ENCODE measurements at regions of chr16 and their contacts with region 1.

Region 1: GRCh38 chr16:50152807-50153452 is at the start of gene TENT4B:
- DNase-seq: peak; percentile 56 to 88
- H3K4me3 ChIP-seq: peak within 1 kb of the TSS; percentile 99
- H3K27ac ChIP-seq: peak within 1 kb of the TSS; percentile 66
- H3K4me1 ChIP-seq: peaks cover 20% of the 10 kb centered on the region
- H3K27me3 ChIP-seq: no peaks in the 10 kb centered on the region
- CTCF ChIP-seq: no peak
- total RNA-seq, gene TENT4B: 6.1 and 11.4 TPM in 2 replicates

Region 2: DNA sequence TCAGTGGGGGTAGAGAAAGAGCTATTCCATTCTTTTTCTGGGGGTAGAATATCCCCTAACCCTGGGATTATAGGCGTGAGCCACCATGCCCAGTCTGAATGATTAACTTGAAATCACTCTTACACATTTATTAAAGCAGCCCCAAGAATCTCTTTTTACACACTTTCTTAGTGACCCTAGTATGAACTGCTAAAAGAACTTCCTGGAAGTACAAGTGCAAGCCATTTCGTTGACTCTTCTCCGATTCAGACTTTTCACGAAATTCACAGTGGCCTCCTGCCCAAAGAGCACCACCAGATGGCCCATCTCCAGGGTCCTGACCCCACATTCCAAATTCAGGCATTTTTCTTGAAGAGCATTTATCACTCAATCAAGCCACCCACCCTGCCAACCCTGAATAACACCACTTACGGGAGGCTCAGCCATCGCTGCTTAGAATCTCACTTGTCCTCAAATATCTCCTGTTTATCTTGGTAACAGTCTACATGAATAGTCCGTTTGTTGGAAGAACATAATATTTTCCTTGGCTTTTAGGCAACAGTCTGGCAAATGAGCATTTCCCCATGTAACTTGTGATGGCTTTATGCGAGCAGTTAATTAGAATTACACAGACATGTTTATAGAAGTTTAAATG is 325.0 kb before region 1 on chr16:
- CTCF ChIA-PET with region 1: no interaction called
- POLR2A ChIA-PET with region 1: no interaction called
- intact Hi-C with region 1: no loop called
- DNase-seq: no peak
- H3K4me3 ChIP-seq: no peak overlapping the region
- H3K27ac ChIP-seq: no peak overlapping the region
- H3K4me1 ChIP-seq: no peaks in the 10 kb centered on the region
- H3K27me3 ChIP-seq: peaks cover 94% of the 10 kb centered on the region
- CTCF ChIP-seq: no peak

Region 3: GRCh38 chr16:50065624-50066481 is 87.1 kb before region 1 on chr16 and contains the start of gene HEATR3:
- CTCF ChIA-PET with region 1: no interaction called
- POLR2A ChIA-PET with region 1: no interaction called
- intact Hi-C with region 1: loop called (anchors 2 kb)
- DNase-seq: peak; percentile 70 to 91
- H3K4me3 ChIP-seq: peak within 1 kb of the TSS; percentile 94
- H3K27ac ChIP-seq: peak within 1 kb of the TSS; percentile 66
- H3K4me1 ChIP-seq: peaks cover 15% of the 10 kb centered on the region; the same call in 1 of the 2 replicates
- H3K27me3 ChIP-seq: no peaks in the 10 kb centered on the region
- CTCF ChIP-seq: no peak
- total RNA-seq, gene HEATR3: 11.5 and 14.3 TPM in 2 replicates

Region 4: GRCh38 chr16:50821586-50821985 is 668.7 kb after region 1 on chr16:
- CTCF ChIA-PET with region 1: no interaction called
- POLR2A ChIA-PET with region 1: no interaction called
- intact Hi-C with region 1: no loop called
- DNase-seq: no peak
- H3K4me3 ChIP-seq: no peak overlapping the region
- H3K27ac ChIP-seq: no peak overlapping the region
- H3K4me1 ChIP-seq: no peaks in the 10 kb centered on the region
- H3K27me3 ChIP-seq: peaks cover 82% of the 10 kb centered on the region
- CTCF ChIP-seq: no peak